Ovary (tissue), 10 donors: ENCODE measurements at regions of chr20 and their contacts with region 1.

Region 1: GRCh38 chr20:50799890-50800655 is 5.2 kb downstream of the BCAS4 start:
- DNase-seq: no peak
- H3K4me3 ChIP-seq: no peak overlapping the region
- H3K27ac ChIP-seq: no peak overlapping the region
- H3K4me1 ChIP-seq: no peaks in the 10 kb centered on the region
- H3K27me3 ChIP-seq: no peaks in the 10 kb centered on the region
- CTCF ChIP-seq: no peak
- EP300 ChIP-seq: no peak
- POLR2A ChIP-seq: no peak

Region 2: DNA sequence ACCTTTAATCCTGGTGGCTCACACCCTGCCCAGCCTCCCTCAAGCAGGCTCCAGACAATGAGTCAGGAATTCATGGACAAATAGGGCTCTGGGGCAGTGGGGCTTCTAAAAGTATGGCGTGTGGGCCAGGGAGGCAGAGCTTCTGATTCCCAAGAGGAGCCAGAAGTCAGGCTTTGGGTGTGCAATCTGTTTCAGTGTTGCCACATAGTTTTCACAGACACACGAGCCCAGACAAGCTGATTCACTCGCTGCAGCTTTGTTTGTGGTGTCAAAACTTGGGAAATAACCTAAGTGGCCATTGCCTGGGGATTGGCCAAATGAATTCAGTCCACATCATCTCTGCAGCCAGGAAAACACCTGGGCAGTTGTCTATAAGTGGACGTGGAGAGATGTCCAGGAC is 655.7 kb before region 1 on chr20:
- intact Hi-C with region 1: no loop called
- DNase-seq: peak in 1 of 5 donors; percentile 55
- H3K4me3 ChIP-seq: no peak overlapping the region
- H3K27ac ChIP-seq: no peak overlapping the region
- H3K4me1 ChIP-seq: peaks cover under 1% of the 10 kb centered on the region
- H3K27me3 ChIP-seq: no peaks in the 10 kb centered on the region
- CTCF ChIP-seq: no peak
- EP300 ChIP-seq: no peak
- POLR2A ChIP-seq: no peak

Region 3: GRCh38 chr20:50713657-50714101 is 86.4 kb before region 1 on chr20:
- intact Hi-C with region 1: no loop called
- DNase-seq: peak in 4 of 5 donors; percentile 40 to 58 (median 54)
- H3K4me3 ChIP-seq: no peak overlapping the region
- H3K27ac ChIP-seq: no peak overlapping the region
- H3K4me1 ChIP-seq: no peaks in the 10 kb centered on the region
- H3K27me3 ChIP-seq: no peaks in the 10 kb centered on the region
- CTCF ChIP-seq: peak in 2 of 3 donors; percentile 32 to 33
- EP300 ChIP-seq: no peak
- POLR2A ChIP-seq: no peak

Region 4: DNA sequence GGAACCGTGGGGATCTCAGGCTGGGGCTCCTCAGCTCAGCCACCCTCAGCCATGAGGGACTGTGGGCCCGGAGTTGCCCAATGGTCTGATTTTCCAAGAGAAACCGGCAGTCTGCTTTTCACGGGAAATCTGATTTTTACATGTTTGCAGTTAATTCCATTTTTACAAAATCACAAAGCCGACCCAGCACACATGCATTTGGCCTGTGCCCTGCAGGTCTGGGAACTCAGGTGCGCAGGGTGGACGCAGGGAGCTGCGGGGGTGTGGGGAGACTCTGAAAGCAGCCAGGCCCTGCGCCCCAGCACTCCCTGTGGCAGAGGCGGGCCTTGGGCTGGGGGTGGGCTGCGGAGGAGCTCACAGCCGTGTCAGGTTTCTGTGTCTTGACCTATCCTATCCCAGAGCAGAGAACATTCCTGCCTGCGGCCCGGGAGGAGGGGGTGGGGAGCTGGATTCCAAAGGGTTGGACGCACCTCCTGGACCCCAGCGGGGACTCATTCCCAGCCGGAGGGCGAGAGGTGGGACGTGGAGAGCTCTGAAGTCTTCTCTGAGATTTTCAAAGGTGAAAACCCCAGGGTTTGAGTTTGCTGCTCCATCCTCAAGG is 70.6 kb after region 1 on chr20:
- intact Hi-C with region 1: loop called in 1 of 4 experiments (anchors 10 kb)
- DNase-seq: peak; percentile 22 to 79 (median 55)
- H3K4me3 ChIP-seq: no peak overlapping the region
- H3K27ac ChIP-seq: peak overlapping the region in 1 of 2 donors; percentile 48
- H3K4me1 ChIP-seq: peaks cover 6% of the 10 kb centered on the region
- H3K27me3 ChIP-seq: no peaks in the 10 kb centered on the region
- CTCF ChIP-seq: no peak
- EP300 ChIP-seq: no peak
- POLR2A ChIP-seq: no peak